ENCODE measurements at regions of chr1 and their contacts with region 1.

Region 1: DNA sequence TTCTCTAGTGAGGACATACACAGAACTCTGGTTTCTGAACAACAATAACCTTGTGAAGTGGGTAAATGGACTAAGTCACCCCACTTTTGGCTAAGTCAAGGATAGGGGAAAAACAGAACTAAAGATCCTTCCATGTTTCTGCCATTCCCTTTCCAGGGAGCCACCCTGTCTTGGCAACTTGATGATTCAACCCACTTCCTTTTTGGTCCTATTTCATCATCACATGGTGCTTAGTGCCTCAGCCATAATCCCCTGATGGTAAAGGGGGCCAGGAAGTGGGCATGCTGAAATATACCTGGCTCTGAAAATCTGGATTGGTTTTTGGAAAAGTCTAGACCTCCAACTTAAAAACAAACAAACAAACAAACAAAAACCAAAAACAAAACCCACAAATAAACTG is 206.4 kb upstream of the FOXD3 start:
- DNase-seq: peak; percentile 28
- H3K4me3 ChIP-seq: no peak overlapping the region
- H3K27ac ChIP-seq: no peak overlapping the region
- H3K4me1 ChIP-seq: peaks cover 11% of the 10 kb centered on the region
- H3K27me3 ChIP-seq: no peaks in the 10 kb centered on the region
- CTCF ChIP-seq: no peak

Region 2: GRCh38 chr1:63189677-63190076 is 73.7 kb after region 1 on chr1:
- CTCF ChIA-PET with region 1: no interaction called
- dilution Hi-C with region 1: loop called (anchors 5 kb)
- in situ Hi-C with region 1: no loop called
- intact Hi-C with region 1: no loop called
- DNase-seq: no peak
- H3K4me3 ChIP-seq: no peak overlapping the region
- H3K27ac ChIP-seq: no peak overlapping the region
- H3K4me1 ChIP-seq: no peaks in the 10 kb centered on the region
- H3K27me3 ChIP-seq: no peaks in the 10 kb centered on the region
- CTCF ChIP-seq: peak; percentile 21 to 25

Region 3: DNA sequence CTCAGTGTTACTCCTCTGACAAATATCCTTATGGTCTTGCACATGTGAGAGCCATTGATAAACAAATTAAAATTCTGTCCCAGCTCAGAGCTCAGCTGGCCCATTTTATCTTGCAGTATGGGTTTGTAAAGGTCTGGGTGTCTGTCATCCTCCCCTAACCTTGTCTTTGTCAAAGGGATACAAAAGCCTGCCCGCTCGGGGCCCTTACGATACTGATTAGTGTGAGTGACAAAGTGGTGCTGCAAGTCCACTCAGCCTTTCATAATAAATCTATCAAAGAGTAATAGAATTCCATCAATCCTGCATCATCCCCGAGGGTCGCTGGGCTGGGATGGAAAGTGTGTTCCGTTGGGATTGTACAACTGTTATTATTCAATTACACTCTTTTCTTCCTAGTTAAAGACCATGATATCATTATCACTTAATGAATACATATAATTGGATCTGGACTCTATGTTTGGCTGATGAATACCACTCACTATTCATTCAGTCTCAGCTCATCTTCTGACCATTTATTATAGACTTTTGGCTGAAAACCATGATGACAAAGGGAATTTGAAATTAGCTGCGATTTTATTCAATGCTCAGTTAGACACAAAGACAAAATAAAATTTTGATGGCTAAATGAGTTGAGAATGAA is 83.8 kb after region 1 on chr1:
- CTCF ChIA-PET with region 1: no interaction called
- dilution Hi-C with region 1: no loop called
- in situ Hi-C with region 1: no loop called
- intact Hi-C with region 1: no loop called
- DNase-seq: no peak
- H3K4me3 ChIP-seq: no peak overlapping the region
- H3K27ac ChIP-seq: no peak overlapping the region
- H3K4me1 ChIP-seq: no peaks in the 10 kb centered on the region
- H3K27me3 ChIP-seq: peaks cover 2% of the 10 kb centered on the region
- CTCF ChIP-seq: no peak

Region 4: DNA sequence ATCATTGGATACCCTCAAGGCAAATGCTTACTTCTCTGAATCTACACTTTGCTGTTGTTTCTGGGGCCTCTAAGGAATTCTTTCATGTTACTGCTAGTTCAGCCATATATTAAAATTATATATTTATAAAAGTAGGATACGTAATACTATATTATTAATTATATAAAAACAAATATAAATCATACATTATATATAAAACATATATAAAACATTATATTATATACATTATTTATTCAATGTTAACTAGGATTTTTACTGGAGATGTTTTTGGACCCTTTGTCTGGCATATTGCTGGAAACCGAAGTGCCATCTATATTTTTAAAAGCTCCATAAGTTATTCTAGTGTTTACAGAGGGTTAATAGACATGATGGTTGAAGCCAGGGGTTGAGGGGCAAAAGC is 263.6 kb after region 1 on chr1:
- CTCF ChIA-PET with region 1: no interaction called
- dilution Hi-C with region 1: no loop called
- in situ Hi-C with region 1: no loop called
- intact Hi-C with region 1: no loop called
- DNase-seq: no peak
- H3K4me3 ChIP-seq: no peak overlapping the region
- H3K27ac ChIP-seq: no peak overlapping the region
- H3K4me1 ChIP-seq: no peaks in the 10 kb centered on the region
- H3K27me3 ChIP-seq: no peaks in the 10 kb centered on the region
- CTCF ChIP-seq: no peak